PC-3 (cell line): ENCODE measurements at regions of chr1 and their contacts with region 1.

Region 1: DNA sequence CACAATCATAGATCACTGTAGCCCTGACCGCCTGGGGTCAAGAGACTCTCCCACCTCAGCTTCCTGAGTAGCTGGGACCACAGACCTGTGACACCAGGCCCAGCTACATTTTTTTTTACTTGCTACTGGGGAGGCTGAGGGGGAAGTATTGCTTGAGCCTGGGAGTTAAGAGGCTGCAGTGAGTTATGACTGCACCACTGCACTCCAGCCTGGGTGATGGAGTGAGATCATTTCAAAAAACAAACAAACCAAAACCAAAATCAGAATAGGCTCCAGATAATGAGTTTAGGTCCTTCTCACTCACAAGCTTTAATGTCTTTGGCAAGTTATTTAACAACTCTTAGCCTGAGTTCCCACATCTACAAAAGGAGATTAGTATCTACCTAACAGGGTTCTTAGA is 22.8 kb downstream of the WDR26 start:
- DNase-seq: no peak
- ATAC-seq: peak; percentile 64
- H3K4me3 ChIP-seq: no peak overlapping the region
- H3K27ac ChIP-seq: no peak overlapping the region
- H3K4me1 ChIP-seq: peaks cover 14% of the 10 kb centered on the region
- H3K27me3 ChIP-seq: no peaks in the 10 kb centered on the region
- CTCF ChIP-seq: no peak

Region 2: GRCh38 chr1:224368409-224368808 is 43.4 kb before region 1 on chr1:
- CTCF ChIA-PET with region 1: interaction called, 11 read pairs
- POLR2A ChIA-PET with region 1: no interaction called
- intact Hi-C with region 1: no loop called
- DNase-seq: no peak
- ATAC-seq: no peak
- H3K4me3 ChIP-seq: no peak overlapping the region
- H3K27ac ChIP-seq: no peak overlapping the region
- H3K4me1 ChIP-seq: no peaks in the 10 kb centered on the region
- H3K27me3 ChIP-seq: no peaks in the 10 kb centered on the region
- CTCF ChIP-seq: no peak